AG04449 (cell line): ENCODE measurements at regions of chr21 and their contacts with region 1.

Region 1: DNA sequence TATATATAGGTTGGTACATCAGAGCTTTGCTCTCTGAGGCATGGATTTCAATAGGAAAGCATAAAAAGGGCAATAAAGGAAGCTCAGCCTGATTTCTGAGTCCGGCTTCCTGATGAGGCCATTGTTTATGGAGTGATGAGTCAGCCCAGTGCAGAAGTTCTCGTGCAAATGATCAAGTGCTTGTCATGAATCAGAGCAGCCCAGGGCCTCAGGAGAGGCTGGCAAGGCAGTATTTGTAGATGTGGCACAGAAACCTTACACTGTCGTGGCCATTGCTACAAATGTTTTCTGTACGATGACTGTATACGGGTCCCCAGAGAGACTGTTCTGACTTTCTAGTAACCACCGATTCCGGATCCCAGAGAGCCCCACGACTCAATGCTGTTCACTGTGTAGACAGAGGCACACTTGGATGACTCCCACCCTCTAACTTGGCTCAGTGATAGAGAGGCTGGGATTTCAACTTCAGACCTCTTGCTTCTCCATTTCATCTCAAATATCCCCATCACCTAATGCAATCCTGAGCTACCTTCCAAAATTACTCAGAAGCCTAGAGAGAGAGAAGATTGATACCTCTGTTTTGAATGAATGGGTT is 26.8 kb downstream of the UMODL1 start:
- DNase-seq: peak; percentile 96
- H3K4me3 ChIP-seq: no peak overlapping the region
- CTCF ChIP-seq: no peak

Region 2: DNA sequence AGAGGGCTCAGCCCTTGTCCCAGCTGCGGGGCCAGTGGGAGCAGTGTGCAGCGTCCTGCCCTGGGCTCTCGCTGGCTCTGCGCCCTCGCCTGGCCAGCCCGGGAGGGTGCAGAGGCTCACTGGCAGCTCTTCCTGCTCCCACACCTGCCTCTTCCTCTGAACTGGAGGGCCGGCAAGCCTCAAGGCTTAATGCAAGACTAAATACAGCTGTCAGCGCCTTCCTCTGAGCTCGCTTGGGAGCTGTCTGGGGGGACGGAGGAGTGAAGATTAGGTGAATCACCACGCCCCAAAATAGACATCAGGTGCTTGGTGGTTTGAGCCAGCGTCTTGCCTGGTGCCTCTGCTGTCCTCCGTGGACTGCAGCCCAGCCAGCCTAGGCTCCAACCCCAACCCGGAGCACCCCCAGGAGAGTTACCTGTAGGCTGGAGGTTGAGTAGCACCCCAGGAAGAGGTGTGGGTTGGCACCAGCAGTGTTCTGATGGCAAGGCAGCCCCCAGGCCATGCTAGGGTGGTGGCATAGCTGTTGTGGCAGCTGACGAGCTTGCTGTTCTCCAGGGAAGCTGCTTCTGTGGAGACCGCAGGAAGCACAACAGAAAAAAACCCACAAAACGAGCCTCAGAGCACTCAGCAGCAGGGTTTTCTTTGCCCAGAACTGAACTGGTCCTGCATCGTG is 10.1 kb after region 1 on chr21:
- CTCF ChIA-PET with region 1: interaction called, 11 read pairs
- POLR2A ChIA-PET with region 1: interaction called, 3 read pairs
- DNase-seq: no peak
- H3K4me3 ChIP-seq: no peak overlapping the region
- CTCF ChIP-seq: peak; percentile 85